Naive thymus-derived CD4-positive, alpha-beta T cell (primary cell): ENCODE measurements at regions of chr5 and their contacts with region 1.

Region 1: DNA sequence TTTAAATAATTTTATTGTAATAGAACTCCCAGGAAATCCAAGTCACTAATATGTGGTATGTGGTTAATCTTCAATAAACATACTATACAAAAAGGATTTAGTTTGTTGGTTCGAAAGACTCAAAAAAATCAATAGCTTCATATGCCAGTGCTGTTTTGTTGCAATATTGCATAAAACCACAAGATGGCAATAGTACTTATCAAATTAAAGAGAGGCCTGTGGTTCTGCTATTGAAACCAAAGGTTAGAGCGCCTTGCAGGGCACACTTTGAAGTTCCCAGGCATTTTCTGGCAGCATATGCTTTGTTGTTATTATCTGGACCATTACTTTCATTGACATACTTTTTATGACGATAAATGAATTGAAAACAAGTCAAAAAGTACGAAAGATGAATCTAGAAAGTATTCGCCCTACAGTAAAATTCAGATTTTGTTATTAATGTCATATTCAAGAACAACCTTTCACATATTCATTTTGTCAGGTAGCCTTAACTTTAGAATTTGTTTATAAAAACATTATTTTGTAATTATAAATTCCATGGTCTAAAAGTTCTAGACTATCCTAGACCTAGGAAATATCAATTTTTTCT is 316.3 kb downstream of the MCTP1 start:
- DNase-seq: peak in 5 of 9 donors; percentile 21 to 49 (median 34)
- ATAC-seq: peak; percentile 72
- H3K4me3 ChIP-seq: no peak overlapping the region
- H3K4me3 Mint-ChIP-seq: no peak overlapping the region
- H3K27ac ChIP-seq: no peak overlapping the region
- H3K27ac Mint-ChIP-seq: no peak overlapping the region
- H3K4me1 ChIP-seq: no peaks in the 10 kb centered on the region
- H3K4me1 Mint-ChIP-seq: no peaks in the 10 kb centered on the region
- H3K27me3 ChIP-seq: no peaks in the 10 kb centered on the region
- H3K27me3 Mint-ChIP-seq: peaks cover 0 to 6% (median 0%) of the 10 kb centered on the region in 5 donors

Region 2: DNA sequence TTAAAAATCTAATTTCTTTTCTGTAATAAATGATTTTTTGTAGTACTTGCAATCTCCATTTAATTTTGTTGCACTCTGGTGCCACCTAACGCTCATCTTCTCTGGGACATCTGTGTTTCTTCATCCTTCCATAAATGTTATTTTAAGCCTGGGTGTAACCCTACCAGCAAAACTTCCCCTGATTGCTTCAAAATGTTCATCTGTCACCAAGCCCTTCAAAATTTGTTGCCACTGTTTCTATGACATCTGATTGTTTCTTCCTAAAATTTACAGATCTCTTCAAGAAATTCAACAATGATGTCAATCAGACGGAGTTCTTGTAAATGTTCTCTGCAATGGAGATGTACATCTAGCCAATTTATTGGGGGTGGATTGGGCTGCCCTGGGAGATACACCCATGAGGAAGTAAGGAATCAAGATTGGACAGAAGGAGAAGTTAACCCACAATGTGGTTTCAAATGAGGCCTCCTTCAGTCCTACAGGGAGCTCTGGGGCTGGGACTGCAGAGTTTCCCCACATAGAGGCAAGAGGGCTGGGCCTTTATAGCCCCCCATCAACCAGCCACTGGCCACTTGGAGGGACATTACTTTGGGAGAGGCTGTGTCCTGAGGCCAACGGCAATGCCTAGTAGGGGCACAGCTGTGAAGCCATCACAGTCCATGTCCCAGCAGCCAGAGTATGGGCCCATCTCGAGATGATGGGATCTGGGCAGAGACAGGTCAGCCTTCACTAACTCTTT is 293.0 kb after region 1 on chr5:
- CTCF ChIA-PET with region 1: no interaction called
- POLR2A ChIA-PET with region 1: no interaction called
- intact Hi-C with region 1: loop called (anchors 1 kb)
- DNase-seq: peak in 1 of 9 donors; percentile 5
- ATAC-seq: peak; percentile 83
- H3K4me3 ChIP-seq: no peak overlapping the region
- H3K4me3 Mint-ChIP-seq: no peak overlapping the region
- H3K27ac ChIP-seq: no peak overlapping the region
- H3K27ac Mint-ChIP-seq: no peak overlapping the region
- H3K4me1 ChIP-seq: no peaks in the 10 kb centered on the region
- H3K4me1 Mint-ChIP-seq: no peaks in the 10 kb centered on the region
- H3K27me3 ChIP-seq: no peaks in the 10 kb centered on the region
- H3K27me3 Mint-ChIP-seq: peaks cover 0 to 10% (median 0%) of the 10 kb centered on the region in 5 donors

Region 3: DNA sequence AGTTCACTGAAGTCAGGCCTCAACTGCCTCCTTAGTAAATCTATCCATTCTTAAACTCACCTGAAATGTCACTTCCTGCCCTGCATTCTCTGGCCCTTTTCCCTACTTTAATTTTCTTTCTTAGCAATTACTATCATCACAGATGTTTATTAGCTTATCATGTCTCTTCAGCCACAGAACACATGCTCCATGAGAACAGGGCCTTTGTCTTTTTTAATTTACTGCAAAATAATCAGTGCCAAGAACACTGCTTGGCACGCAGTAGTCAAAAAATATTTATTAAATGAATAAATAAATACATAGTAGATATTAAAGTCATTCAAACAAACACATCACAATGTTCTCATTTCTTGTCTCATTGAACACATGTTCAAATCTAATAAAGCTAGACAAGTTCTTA is 539.9 kb after region 1 on chr5:
- CTCF ChIA-PET with region 1: no interaction called
- POLR2A ChIA-PET with region 1: no interaction called
- intact Hi-C with region 1: loop called in 1 of 2 experiments (anchors 10 kb)
- DNase-seq: no peak
- ATAC-seq: no peak
- H3K4me3 ChIP-seq: no peak overlapping the region
- H3K4me3 Mint-ChIP-seq: no peak overlapping the region
- H3K27ac ChIP-seq: no peak overlapping the region
- H3K27ac Mint-ChIP-seq: peak overlapping the region in 3 of 9 donors; percentile 24 to 78 (median 54)
- H3K4me1 ChIP-seq: no peaks in the 10 kb centered on the region
- H3K4me1 Mint-ChIP-seq: peaks cover 0 to 4% (median 0%) of the 10 kb centered on the region in 7 donors
- H3K27me3 ChIP-seq: no peaks in the 10 kb centered on the region
- H3K27me3 Mint-ChIP-seq: no peaks in the 10 kb centered on the region